Colonic mucosa (tissue), 4 donors: ENCODE measurements at regions of chr18 and their contacts with region 1.

Region 1: DNA sequence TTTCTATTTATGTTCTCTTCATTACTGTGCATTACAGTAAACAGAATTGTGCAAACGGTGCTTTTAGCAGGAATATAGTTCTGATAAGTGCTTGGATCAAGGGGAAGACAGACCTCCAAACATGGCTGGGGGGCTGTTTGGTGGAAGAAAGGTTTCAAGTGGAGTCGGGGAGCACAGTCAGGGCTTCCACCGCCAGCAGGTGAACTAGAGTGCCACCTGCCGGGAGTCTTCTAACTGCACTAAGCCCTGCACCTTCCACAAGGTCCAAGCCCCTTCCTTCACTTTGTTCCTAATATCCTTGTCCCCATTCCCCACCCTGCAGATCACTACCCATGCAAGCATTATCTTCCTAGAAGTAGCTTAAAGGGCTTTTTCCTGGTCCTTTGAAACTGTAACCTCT is 11.1 kb downstream of the ONECUT2 start:
- DNase-seq: no peak
- H3K4me3 ChIP-seq: no peak overlapping the region
- H3K27ac ChIP-seq: no peak overlapping the region
- H3K4me1 ChIP-seq: no peaks in the 10 kb centered on the region
- H3K27me3 ChIP-seq: peaks cover 22% of the 10 kb centered on the region
- CTCF ChIP-seq: peak; percentile 37

Region 2: GRCh38 chr18:56748698-56749268 is 697.5 kb before region 1 on chr18:
- intact Hi-C with region 1: loop called (anchors 5 kb)
- DNase-seq: no peak
- H3K4me3 ChIP-seq: no peak overlapping the region
- H3K27ac ChIP-seq: no peak overlapping the region
- H3K4me1 ChIP-seq: no peaks in the 10 kb centered on the region
- H3K27me3 ChIP-seq: no peaks in the 10 kb centered on the region
- CTCF ChIP-seq: peak; percentile 47

Region 3: GRCh38 chr18:56869189-56869777 is 577.0 kb before region 1 on chr18:
- intact Hi-C with region 1: loop called (anchors 10 kb)
- DNase-seq: no peak
- H3K4me3 ChIP-seq: no peak overlapping the region
- H3K27ac ChIP-seq: no peak overlapping the region
- H3K4me1 ChIP-seq: no peaks in the 10 kb centered on the region
- H3K27me3 ChIP-seq: no peaks in the 10 kb centered on the region
- CTCF ChIP-seq: peak; percentile 70